Activated CD4-positive, alpha-beta T cell treated with anti-CD3 and anti-CD28 coated beads, Interleukin-2, amount 10 ng/mL, durations not matched to agents 24 days and 14 days (primary cell): ENCODE measurements at regions of chr19 and their contacts with region 1.

Region 1: GRCh38 chr19:43651758-43652545 is 12.3 kb upstream of the CADM4 start:
- DNase-seq: peak; percentile 83
- H3K4me3 Mint-ChIP-seq: no peak overlapping the region
- H3K27ac Mint-ChIP-seq: no peak overlapping the region
- H3K4me1 Mint-ChIP-seq: no peaks in the 10 kb centered on the region
- H3K27me3 Mint-ChIP-seq: no peaks in the 10 kb centered on the region

Region 2: GRCh38 chr19:43555185-43555770 is 96.7 kb before region 1 on chr19:
- intact Hi-C with region 1: loop called (anchors 1 kb)
- DNase-seq: peak; percentile 96
- H3K4me3 Mint-ChIP-seq: no peak overlapping the region
- H3K27ac Mint-ChIP-seq: peak overlapping the region; percentile 3
- H3K4me1 Mint-ChIP-seq: peaks cover 8% of the 10 kb centered on the region
- H3K27me3 Mint-ChIP-seq: no peaks in the 10 kb centered on the region